ENCODE measurements at regions of chr5 and their contacts with region 1.

Region 1: DNA sequence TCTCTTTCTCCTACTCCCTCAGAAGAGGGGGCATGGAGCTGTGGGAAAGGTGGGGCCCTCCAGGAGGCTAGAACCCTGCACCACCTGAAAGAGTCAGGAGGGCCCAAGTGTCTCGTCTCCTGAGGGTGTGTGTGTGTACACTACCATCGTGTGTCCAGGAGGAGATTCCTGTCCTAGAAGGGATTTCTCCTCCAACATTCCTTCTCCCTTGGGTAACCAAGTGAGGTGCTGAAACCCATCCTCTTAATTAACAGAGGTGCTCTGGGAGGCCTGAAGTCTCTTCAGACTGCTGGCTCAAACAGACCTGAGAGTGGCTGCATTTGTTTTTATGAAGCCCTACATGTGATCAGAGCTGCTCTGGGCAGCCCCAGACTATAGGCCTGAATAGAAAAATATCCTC is 61.1 kb upstream of the FAM169A start:
- DNase-seq: no peak
- ATAC-seq: no peak
- H3K4me3 ChIP-seq: no peak overlapping the region
- H3K4me3 Mint-ChIP-seq: no peak overlapping the region
- H3K27ac ChIP-seq: no peak overlapping the region
- H3K27ac Mint-ChIP-seq: no peak overlapping the region
- H3K4me1 ChIP-seq: no peaks in the 10 kb centered on the region
- H3K4me1 Mint-ChIP-seq: no peaks in the 10 kb centered on the region
- H3K27me3 ChIP-seq: no peaks in the 10 kb centered on the region
- H3K27me3 Mint-ChIP-seq: no peaks in the 10 kb centered on the region
- CTCF ChIP-seq: no peak

Region 2: DNA sequence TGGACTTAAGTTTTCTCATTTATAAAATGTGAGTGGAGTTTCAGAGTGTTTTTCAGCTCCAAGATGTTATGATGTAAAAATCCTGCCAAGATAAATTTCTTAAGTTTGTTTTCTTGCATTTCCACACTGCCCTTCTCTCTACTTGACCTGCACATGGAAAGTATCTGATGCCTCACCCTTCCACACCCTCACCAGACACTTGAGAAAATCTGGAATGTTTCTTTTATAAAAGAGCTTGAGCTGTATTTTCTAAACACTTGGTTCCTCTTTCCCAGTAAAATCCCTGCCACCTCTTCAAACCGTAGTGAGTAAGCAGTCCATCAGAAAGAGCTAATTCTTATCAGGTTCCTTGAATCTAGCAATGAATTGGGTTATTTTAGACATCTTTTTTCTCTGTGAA is 1521.6 kb before region 1 on chr5:
- CTCF ChIA-PET with region 1: no interaction called
- POLR2A ChIA-PET with region 1: no interaction called
- intact Hi-C with region 1: no loop called
- DNase-seq: no peak
- ATAC-seq: no peak
- H3K4me3 ChIP-seq: no peak overlapping the region
- H3K4me3 Mint-ChIP-seq: no peak overlapping the region
- H3K27ac ChIP-seq: no peak overlapping the region
- H3K27ac Mint-ChIP-seq: no peak overlapping the region
- H3K4me1 ChIP-seq: no peaks in the 10 kb centered on the region
- H3K4me1 Mint-ChIP-seq: peaks cover 4% of the 10 kb centered on the region
- H3K27me3 ChIP-seq: no peaks in the 10 kb centered on the region
- H3K27me3 Mint-ChIP-seq: peaks cover 21% of the 10 kb centered on the region
- CTCF ChIP-seq: no peak

Region 3: GRCh38 chr5:74945561-74946165 is 18.3 kb after region 1 on chr5:
- CTCF ChIA-PET with region 1: interaction called, 3 read pairs
- POLR2A ChIA-PET with region 1: no interaction called
- intact Hi-C with region 1: loop called in 1 of 2 experiments (anchors 2 kb)
- DNase-seq: peak in 1 of 9 experiments; percentile 10
- ATAC-seq: no peak
- H3K4me3 ChIP-seq: no peak overlapping the region
- H3K4me3 Mint-ChIP-seq: no peak overlapping the region
- H3K27ac ChIP-seq: no peak overlapping the region
- H3K27ac Mint-ChIP-seq: no peak overlapping the region
- H3K4me1 ChIP-seq: no peaks in the 10 kb centered on the region
- H3K4me1 Mint-ChIP-seq: peaks cover 5% of the 10 kb centered on the region
- H3K27me3 ChIP-seq: no peaks in the 10 kb centered on the region
- H3K27me3 Mint-ChIP-seq: peaks cover 2% of the 10 kb centered on the region
- CTCF ChIP-seq: no peak

Region 4: DNA sequence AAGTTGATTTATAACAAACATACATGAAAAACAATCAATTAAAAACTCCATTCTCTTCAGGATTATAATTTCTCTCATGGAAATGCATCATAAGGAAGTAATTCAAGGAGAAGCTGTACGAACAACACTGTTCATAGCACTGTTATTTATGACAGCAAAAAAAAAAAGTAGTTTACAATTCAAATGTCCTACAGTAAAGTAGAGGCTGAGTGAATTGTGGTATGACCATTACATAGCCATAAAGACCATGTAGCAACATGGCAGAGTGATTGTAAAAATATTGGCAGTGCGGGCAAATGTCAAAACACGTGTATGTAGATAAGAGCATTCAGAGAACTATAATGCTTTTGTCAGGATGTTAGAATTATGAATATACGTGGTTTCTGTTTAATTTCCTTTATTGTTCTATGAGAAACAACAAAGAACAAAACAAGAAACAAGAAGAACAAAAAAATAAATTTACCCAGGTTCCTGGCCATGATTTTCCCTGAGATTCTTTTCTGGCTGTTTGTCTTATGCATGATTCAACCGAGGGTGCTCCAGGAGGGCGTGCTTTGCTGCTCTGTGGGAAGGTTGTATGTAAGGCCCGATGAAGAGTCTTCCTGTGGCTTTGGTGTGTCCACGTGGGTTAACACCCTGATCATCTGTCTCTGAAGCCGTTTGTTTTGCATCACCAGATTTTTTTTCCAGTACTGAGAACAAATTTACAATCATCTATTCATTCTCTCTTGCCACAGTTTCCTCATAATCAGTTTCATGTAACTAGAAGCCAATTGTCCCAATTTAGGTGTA is 96.2 kb after region 1 on chr5:
- CTCF ChIA-PET with region 1: no interaction called
- POLR2A ChIA-PET with region 1: no interaction called
- intact Hi-C with region 1: loop called in 1 of 2 experiments (anchors 5 kb)
- DNase-seq: peak in 8 of 9 experiments; percentile 18 to 81 (median 52)
- ATAC-seq: peak; percentile 79
- H3K4me3 ChIP-seq: no peak overlapping the region
- H3K4me3 Mint-ChIP-seq: peak overlapping the region; percentile 63
- H3K27ac ChIP-seq: peak overlapping the region in 1 of 2 experiments; percentile 42
- H3K27ac Mint-ChIP-seq: peak overlapping the region; percentile 90
- H3K4me1 ChIP-seq: peaks cover 34% of the 10 kb centered on the region
- H3K4me1 Mint-ChIP-seq: peaks cover 55% of the 10 kb centered on the region
- H3K27me3 ChIP-seq: no peaks in the 10 kb centered on the region
- H3K27me3 Mint-ChIP-seq: no peaks in the 10 kb centered on the region
- CTCF ChIP-seq: no peak

Region 5: GRCh38 chr5:75265731-75266130 is 338.4 kb after region 1 on chr5:
- CTCF ChIA-PET with region 1: interaction called, 11 read pairs
- POLR2A ChIA-PET with region 1: interaction called, 4 read pairs
- intact Hi-C with region 1: loop called (anchors 1 to 2 kb)
- DNase-seq: peak in 2 of 9 experiments; percentile 57 to 67
- ATAC-seq: peak; percentile 78
- H3K4me3 ChIP-seq: no peak overlapping the region
- H3K4me3 Mint-ChIP-seq: no peak overlapping the region
- H3K27ac ChIP-seq: no peak overlapping the region
- H3K27ac Mint-ChIP-seq: no peak overlapping the region
- H3K4me1 ChIP-seq: no peaks in the 10 kb centered on the region
- H3K4me1 Mint-ChIP-seq: peaks cover 3% of the 10 kb centered on the region
- H3K27me3 ChIP-seq: no peaks in the 10 kb centered on the region
- H3K27me3 Mint-ChIP-seq: peaks cover 5% of the 10 kb centered on the region
- CTCF ChIP-seq: peak; percentile 68

Region 6: DNA sequence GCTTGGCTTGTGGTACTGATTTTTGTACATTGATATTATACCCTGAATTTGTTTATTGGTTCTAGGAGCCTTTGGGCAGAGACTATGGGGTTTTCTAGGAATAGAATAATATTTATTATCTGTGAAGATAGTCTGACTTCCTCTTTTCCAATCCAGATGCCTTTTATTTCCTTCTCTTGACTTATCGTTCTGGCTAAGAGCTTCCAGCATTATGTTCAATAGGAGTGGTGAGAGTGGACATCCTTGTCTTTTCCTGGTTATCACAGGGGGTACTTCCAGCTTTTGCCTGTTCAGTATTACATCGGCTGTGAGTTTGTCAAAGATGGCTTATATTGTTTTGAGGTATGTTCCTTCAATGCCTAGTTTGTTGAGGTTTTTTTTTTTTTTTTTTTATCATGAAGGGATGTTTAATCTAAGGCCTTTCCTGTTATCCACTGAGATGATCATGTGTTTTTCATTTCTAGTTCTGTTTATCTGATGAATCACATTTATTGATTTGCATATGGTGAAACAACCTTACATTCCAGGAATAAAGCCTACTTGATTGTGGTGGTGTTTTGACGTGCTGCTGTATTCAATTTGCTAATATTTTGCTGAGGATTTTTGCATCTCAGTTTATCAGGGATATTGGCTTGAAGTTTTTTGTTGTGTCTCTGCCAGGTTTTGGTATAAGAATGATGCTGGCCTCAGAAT is 506.6 kb after region 1 on chr5:
- CTCF ChIA-PET with region 1: no interaction called
- POLR2A ChIA-PET with region 1: no interaction called
- intact Hi-C with region 1: no loop called
- DNase-seq: no peak
- ATAC-seq: no peak
- H3K4me3 ChIP-seq: no peak overlapping the region
- H3K4me3 Mint-ChIP-seq: no peak overlapping the region
- H3K27ac ChIP-seq: no peak overlapping the region
- H3K27ac Mint-ChIP-seq: no peak overlapping the region
- H3K4me1 ChIP-seq: no peaks in the 10 kb centered on the region
- H3K4me1 Mint-ChIP-seq: peaks cover 3% of the 10 kb centered on the region
- H3K27me3 ChIP-seq: no peaks in the 10 kb centered on the region
- H3K27me3 Mint-ChIP-seq: no peaks in the 10 kb centered on the region
- CTCF ChIP-seq: no peak

Region 7: DNA sequence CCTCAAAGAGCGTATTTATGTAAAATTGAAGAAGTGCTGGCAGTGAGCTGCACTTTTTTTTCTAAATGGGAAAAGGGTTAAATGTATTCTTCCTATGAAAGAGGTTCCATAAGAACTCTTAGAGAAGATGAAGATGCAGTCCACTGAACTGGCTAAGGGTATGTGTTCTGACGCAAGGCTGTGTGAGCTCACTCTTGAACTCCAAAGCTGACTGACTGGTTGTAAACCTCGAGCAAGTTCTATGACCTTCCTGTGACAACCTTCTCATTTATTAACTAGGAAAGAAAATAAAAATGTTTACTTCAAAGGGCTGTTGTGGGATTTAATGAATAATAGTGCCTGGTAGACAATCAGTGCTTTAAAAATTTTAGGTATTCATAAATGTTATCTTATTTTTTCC is 743.2 kb after region 1 on chr5:
- CTCF ChIA-PET with region 1: no interaction called
- POLR2A ChIA-PET with region 1: no interaction called
- intact Hi-C with region 1: loop called in 1 of 2 experiments (anchors 10 kb)
- DNase-seq: no peak
- ATAC-seq: no peak
- H3K4me3 ChIP-seq: no peak overlapping the region
- H3K4me3 Mint-ChIP-seq: no peak overlapping the region
- H3K27ac ChIP-seq: no peak overlapping the region
- H3K27ac Mint-ChIP-seq: no peak overlapping the region
- H3K4me1 ChIP-seq: peaks cover 15% of the 10 kb centered on the region
- H3K4me1 Mint-ChIP-seq: peaks cover 14% of the 10 kb centered on the region
- H3K27me3 ChIP-seq: no peaks in the 10 kb centered on the region
- H3K27me3 Mint-ChIP-seq: no peaks in the 10 kb centered on the region
- CTCF ChIP-seq: no peak

Region 8: DNA sequence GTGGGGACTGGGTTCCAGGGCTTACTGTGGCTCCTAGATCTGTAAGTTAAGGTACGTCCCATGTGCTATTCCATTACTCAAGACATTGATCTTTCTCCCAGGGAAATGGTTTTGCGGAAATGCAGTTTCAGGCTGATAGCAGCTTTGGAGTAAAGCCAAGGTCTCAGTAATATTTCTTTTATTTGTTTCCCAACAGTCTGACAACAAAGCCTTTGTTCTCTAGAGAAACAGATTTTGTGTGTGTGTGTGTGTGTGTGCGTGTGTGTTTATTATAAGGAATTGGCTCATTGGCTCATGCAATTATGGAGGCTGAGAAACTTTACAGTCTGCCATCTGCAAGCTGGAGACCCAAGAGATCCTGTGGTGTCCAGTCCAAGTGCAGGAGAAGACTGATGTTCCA is 802.0 kb after region 1 on chr5:
- CTCF ChIA-PET with region 1: no interaction called
- POLR2A ChIA-PET with region 1: no interaction called
- intact Hi-C with region 1: no loop called
- DNase-seq: no peak
- ATAC-seq: no peak
- H3K4me3 ChIP-seq: no peak overlapping the region
- H3K4me3 Mint-ChIP-seq: no peak overlapping the region
- H3K27ac ChIP-seq: no peak overlapping the region
- H3K27ac Mint-ChIP-seq: no peak overlapping the region
- H3K4me1 ChIP-seq: no peaks in the 10 kb centered on the region
- H3K4me1 Mint-ChIP-seq: no peaks in the 10 kb centered on the region
- H3K27me3 ChIP-seq: no peaks in the 10 kb centered on the region
- H3K27me3 Mint-ChIP-seq: peaks cover 6% of the 10 kb centered on the region
- CTCF ChIP-seq: no peak